ENCODE measurements at regions of chr1 and their contacts with region 1.

Region 1: DNA sequence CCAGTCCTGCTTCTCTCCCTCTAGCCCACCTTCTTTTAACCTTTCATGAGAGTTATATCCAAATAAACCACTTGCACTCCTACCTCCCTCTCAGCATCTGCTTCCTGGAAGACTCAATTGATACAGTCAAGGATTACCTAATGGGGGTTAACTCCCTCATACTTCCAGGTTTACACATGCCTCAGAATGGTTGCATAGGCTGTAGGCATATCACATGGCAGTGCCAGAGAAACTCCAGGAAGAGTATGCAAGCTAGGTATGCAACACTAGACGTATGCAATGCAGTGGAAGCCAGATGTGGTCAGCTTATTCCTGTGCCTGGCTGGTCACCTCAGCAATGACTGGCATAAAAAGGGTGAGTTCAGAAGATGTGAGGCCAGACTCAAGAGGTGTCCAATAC is 32.7 kb upstream of the VANGL1 start:
- DNase-seq: no peak
- ATAC-seq: no peak
- H3K4me3 ChIP-seq: no peak overlapping the region
- H3K4me3 Mint-ChIP-seq: no peak overlapping the region
- H3K27ac ChIP-seq: no peak overlapping the region
- H3K27ac Mint-ChIP-seq: no peak overlapping the region
- H3K4me1 ChIP-seq: no peaks in the 10 kb centered on the region
- H3K4me1 Mint-ChIP-seq: no peaks in the 10 kb centered on the region
- H3K27me3 ChIP-seq: no peaks in the 10 kb centered on the region
- H3K27me3 Mint-ChIP-seq: peaks cover 21 to 24% of the 10 kb centered on the region in 2 donors
- CTCF ChIP-seq: no peak

Region 2: GRCh38 chr1:115706587-115707425 is 97.8 kb after region 1 on chr1:
- intact Hi-C with region 1: loop called (anchors 1 kb)
- DNase-seq: peak in 1 of 2 donors; percentile 52
- ATAC-seq: peak in 2 of 3 donors; percentile 47 to 67
- H3K4me3 ChIP-seq: no peak overlapping the region
- H3K4me3 Mint-ChIP-seq: no peak overlapping the region
- H3K27ac ChIP-seq: no peak overlapping the region
- H3K27ac Mint-ChIP-seq: no peak overlapping the region
- H3K4me1 ChIP-seq: no peaks in the 10 kb centered on the region
- H3K4me1 Mint-ChIP-seq: no peaks in the 10 kb centered on the region
- H3K27me3 ChIP-seq: no peaks in the 10 kb centered on the region
- H3K27me3 Mint-ChIP-seq: peaks cover 13 to 16% of the 10 kb centered on the region in 2 donors
- CTCF ChIP-seq: peak; percentile 74

Region 3: DNA sequence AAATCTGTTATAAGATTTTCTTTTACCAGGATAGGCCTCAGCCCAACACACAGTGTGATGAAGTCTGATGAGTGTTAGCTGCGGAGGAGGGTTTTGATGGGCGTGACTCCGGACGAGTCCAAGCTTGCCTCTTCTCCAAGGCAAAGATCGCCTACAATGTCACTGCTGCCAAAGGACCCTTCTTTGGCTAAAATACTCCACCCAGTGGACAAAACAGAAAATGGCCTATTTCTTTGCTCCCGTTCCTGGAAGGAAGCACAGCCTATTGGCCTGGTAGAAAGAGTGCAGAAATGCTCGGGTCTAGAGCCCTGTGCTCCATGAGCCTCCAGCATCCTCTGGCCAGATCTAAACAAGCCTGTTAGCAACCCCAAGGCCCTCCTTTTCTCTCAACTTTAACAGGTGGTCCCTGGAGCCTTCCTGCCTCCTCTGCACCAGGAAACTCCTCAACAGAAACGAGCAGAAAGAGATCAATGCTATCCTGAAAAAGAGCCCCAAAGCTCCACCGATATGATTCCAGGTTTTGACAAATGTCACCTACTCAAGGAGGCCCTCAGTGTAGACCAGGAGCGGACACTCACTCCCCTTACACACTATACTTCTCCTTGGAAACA is 162.9 kb after region 1 on chr1:
- intact Hi-C with region 1: loop called (anchors 5 kb)
- DNase-seq: peak in 1 of 2 donors; percentile 23
- ATAC-seq: peak in 2 of 3 donors; percentile 10 to 43
- H3K4me3 ChIP-seq: no peak overlapping the region
- H3K4me3 Mint-ChIP-seq: no peak overlapping the region
- H3K27ac ChIP-seq: no peak overlapping the region
- H3K27ac Mint-ChIP-seq: no peak overlapping the region
- H3K4me1 ChIP-seq: no peaks in the 10 kb centered on the region
- H3K4me1 Mint-ChIP-seq: no peaks in the 10 kb centered on the region
- H3K27me3 ChIP-seq: no peaks in the 10 kb centered on the region
- H3K27me3 Mint-ChIP-seq: peaks cover 4 to 17% of the 10 kb centered on the region in 2 donors
- CTCF ChIP-seq: peak; percentile 20

Region 4: DNA sequence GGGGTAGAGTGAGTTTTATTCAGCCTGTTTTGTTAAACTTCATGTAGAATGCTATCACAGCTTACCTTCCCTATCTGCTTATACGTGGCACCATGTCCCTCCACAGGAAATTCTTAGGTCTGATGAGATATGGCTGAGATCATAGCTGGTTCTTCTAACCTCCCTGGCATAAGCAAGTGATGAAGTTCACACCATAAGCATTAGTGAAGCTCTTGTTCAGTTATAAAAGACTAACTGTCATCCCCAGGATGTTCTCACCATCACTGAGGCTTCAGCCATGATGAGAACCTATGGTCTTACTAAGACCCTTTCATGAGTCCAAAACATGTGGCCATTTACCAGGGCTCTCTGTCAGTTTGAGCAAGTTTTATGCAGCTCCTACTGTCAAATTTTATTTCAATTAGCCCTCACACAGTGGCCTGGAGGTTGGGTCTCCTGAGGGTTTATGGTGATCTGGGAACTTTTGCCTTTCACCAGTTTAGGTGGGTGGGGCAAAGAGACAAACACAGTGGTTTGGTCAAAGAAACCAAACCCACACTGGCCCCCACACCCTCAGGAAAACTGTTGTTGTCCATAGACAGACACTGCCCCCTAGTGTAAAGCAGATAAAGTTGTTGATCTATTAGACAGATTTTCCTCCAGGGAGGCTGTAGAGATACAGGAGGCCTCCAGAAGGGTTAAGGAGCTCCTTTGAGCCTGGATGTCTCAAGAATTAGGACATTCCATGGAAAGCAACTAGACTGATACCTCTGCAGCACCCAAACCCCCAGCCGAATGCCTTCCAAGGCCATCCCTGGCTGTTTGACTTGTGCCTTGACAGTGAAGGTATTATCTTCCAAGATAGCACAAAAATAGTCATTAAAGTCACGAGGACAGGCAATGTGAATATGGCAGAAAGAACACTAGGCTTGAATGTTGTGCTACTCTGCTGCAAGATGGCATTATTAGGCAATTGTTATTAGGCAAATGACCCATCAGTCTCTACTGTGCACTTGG is 372.3 kb after region 1 on chr1:
- intact Hi-C with region 1: loop called (anchors 10 kb)
- DNase-seq: peak; percentile 21 to 51
- ATAC-seq: peak; percentile 56 to 63 (median 62)
- H3K4me3 ChIP-seq: no peak overlapping the region
- H3K4me3 Mint-ChIP-seq: no peak overlapping the region
- H3K27ac ChIP-seq: no peak overlapping the region
- H3K27ac Mint-ChIP-seq: peak overlapping the region in 1 of 2 donors; percentile 44
- H3K4me1 ChIP-seq: peaks cover 12% of the 10 kb centered on the region
- H3K4me1 Mint-ChIP-seq: peaks cover 17 to 32% of the 10 kb centered on the region in 2 donors
- H3K27me3 ChIP-seq: no peaks in the 10 kb centered on the region
- H3K27me3 Mint-ChIP-seq: no peaks in the 10 kb centered on the region
- CTCF ChIP-seq: peak; percentile 76